H1 (cell line): ENCODE measurements at regions of chr17 and their contacts with region 1.

Region 1: DNA sequence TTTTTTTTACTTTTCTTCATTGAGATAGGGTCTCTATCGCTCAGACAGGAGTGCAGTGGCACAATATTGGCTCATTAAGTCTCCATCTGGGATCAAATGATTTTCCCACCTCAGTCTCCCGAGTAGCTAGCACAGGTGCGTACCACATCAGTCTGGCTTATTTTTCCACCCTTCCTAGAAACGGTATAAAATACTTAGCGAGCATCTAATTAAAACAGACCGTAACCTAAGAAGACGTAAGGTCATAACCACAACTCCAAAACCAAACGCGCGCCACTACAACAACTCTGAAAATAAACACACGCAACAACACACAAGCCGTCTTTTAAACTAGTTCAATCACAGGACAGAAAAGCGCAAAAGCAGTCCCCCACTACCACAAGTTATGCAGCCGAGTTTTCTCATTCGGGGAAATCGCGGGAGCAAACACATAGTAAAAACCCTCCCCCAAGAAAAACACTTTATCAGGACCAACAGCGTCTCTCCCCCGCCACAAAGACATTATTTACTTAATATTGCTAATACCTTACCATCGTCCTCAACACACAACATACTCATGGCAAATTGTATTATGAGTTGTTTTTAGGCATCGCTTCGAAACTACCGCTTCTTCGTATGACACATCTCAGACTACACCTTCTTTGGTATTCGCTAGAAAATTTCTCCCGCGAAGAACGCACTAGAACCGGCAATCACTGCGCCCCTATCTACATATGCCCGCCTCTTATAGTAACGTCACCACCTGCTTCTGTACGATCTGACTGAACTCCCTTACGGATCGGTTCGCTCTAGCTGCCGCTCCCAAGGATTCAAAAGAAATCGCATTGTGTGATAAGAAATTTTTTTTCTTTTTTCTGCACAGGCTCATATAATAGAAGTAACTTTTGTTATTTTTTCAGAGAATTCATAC is 32.8 kb downstream of the TEX14 start:
- DNase-seq: peak; percentile 82 to 86
- H3K4me3 ChIP-seq: peak overlapping the region; percentile 29 to 62 (median 39); a peak in 5 of 8 replicates
- H3K27ac ChIP-seq: peak overlapping the region; percentile 98
- H3K4me1 ChIP-seq: peaks cover 0 to 7% (median 1%) of the 10 kb centered on the region in 4 experiments; a peak in 2 of 7 replicates
- H3K27me3 ChIP-seq: no peaks in the 10 kb centered on the region
- CTCF ChIP-seq: no peak
- EP300 ChIP-seq: 0 out of 3 replicates have a peak, but pooled peaks of 1 of the 2 experiments have one; percentile 73
- POLR2A ChIP-seq: peak; percentile 100
- RAD21 ChIP-seq: peak in 1 of 2 experiments; percentile 16; a peak in 1 of 4 replicates

Region 2: GRCh38 chr17:58531661-58532554 is 127.2 kb before region 1 on chr17:
- CTCF ChIA-PET with region 1: no interaction called
- POLR2A ChIA-PET with region 1: interaction called, 31 read pairs
- DNase-seq: peak in 1 of 2 experiments; percentile 87
- H3K4me3 ChIP-seq: peak overlapping the region; percentile 67 to 90 (median 72)
- H3K27ac ChIP-seq: no peak overlapping the region
- H3K4me1 ChIP-seq: peaks cover 7 to 15% (median 9%) of the 10 kb centered on the region in 4 experiments
- H3K27me3 ChIP-seq: peaks cover 0 to 6% (median 4%) of the 10 kb centered on the region in 4 experiments; a peak in 5 of 7 replicates
- CTCF ChIP-seq: no peak
- EP300 ChIP-seq: no peak
- POLR2A ChIP-seq: no peak
- RAD21 ChIP-seq: no peak

Region 3: DNA sequence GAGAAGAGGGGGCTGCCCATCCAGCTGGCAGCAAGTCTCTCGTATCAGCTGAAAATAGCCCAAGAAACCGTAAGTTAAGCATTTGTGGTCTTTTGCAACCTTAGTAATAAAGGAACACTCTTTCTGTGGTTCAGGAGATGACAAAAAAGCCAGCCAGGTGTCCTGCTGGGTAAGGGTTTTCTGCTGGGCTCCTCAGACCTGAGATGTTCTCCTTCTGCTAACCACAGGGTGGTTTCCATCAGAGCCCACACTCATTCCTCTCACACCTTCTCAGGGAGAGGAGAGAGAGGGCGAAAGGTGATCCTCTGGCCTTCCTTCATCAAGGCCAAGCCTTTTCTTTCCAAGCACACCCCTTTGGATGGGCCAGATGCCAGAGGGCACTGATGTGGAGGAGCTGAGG is 37.9 kb before region 1 on chr17:
- CTCF ChIA-PET with region 1: no interaction called
- POLR2A ChIA-PET with region 1: interaction called, 17 read pairs
- DNase-seq: no peak
- H3K4me3 ChIP-seq: no peak overlapping the region
- H3K27ac ChIP-seq: no peak overlapping the region
- H3K4me1 ChIP-seq: no peaks in the 10 kb centered on the region
- H3K27me3 ChIP-seq: no peaks in the 10 kb centered on the region
- CTCF ChIP-seq: no peak
- EP300 ChIP-seq: no peak
- POLR2A ChIP-seq: no peak
- RAD21 ChIP-seq: no peak

Region 4: DNA sequence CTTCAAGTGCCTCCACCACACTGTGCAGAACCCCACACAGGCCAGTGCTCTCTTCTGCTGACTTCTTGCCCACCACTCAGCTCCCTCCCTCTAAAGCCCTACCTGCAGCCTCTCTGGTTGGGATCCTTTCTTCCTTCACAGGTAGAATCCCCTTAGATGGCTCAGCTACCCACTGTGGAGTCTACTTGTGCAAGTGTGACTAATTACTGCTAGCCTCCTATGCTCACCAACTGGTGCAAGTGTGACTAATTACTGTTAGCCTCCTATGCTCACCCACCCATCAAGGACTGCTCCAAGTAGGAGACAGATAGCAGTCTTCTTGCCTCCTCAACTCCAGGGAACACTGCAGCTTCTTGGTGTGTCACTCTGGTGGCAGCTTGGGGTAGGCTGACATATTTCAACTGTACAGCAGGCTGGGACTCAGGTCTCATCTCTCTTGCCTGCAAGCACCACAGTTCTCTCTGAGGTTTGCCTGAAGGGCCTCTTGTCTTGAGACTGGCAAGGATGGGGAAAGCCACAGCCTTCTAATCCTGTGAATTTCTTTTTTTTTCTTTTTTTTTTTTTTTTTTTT is 10.7 kb before region 1 on chr17:
- CTCF ChIA-PET with region 1: no interaction called
- POLR2A ChIA-PET with region 1: interaction called, 55 read pairs
- DNase-seq: no peak
- H3K4me3 ChIP-seq: no peak overlapping the region
- H3K27ac ChIP-seq: no peak overlapping the region
- H3K4me1 ChIP-seq: peaks cover 0 to 1% (median 0%) of the 10 kb centered on the region in 4 experiments; a peak in 1 of 7 replicates
- H3K27me3 ChIP-seq: no peaks in the 10 kb centered on the region
- CTCF ChIP-seq: no peak
- EP300 ChIP-seq: no peak
- POLR2A ChIP-seq: no peak
- RAD21 ChIP-seq: no peak

Region 5: DNA sequence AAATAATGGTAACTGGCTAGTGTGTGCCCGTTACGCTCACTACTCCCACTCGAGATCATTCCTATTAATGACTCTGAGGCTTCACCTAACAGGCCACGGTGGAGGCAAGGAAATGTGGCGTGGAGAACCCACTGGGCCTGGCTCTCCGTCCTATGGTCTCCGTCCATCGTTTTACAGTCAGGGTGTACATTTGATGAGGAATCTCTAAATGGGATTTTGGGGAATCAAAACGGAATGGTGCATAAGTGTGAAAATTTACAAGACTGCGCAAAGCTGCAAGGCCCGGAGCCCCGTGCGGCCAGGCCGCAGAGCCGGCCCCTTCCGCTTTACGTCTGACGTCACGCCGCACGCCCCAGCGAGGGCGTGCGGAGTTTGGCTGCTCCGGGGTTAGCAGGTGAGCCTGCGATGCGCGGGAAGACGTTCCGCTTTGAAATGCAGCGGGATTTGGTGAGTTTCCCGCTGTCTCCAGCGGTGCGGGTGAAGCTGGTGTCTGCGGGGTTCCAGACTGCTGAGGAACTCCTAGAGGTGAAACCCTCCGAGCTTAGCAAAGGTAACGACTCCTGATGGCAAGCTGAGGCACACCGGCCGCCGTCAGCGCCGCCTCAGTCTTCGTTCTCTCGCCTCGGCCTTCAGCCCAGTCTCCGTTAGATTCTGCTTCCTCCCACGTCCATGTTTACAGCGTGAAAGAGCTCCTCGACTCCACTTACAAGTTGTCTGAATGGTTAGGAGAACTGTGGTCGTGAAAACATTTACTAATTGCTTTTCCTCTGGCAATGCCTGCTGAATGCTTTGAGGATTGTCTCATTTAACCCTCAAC is 33.4 kb after region 1 on chr17 and contains the start of gene RAD51C:
- CTCF ChIA-PET with region 1: interaction called, 4 read pairs
- POLR2A ChIA-PET with region 1: interaction called, 14 read pairs
- DNase-seq: peak; percentile 27 to 66
- H3K4me3 ChIP-seq: peak within 1 kb of the TSS; percentile 30 to 64 (median 55)
- H3K27ac ChIP-seq: peak within 1 kb of the TSS; percentile 4; the same call in 1 of the 2 replicates
- H3K4me1 ChIP-seq: peaks cover 0 to 4% (median 0%) of the 10 kb centered on the region in 4 experiments; a peak in 3 of 7 replicates
- H3K27me3 ChIP-seq: no peaks in the 10 kb centered on the region
- CTCF ChIP-seq: no peak
- EP300 ChIP-seq: peak in 1 of 2 experiments; percentile 49; a peak in 1 of 3 replicates
- POLR2A ChIP-seq: peak in 1 of 2 experiments; percentile 78; a peak in 2 of 3 replicates
- RAD21 ChIP-seq: no peak; a peak in 1 of 4 replicates
- total RNA-seq, gene RAD51C: 10.2 and 10.4 TPM in 2 replicates